ENCODE measurements at regions of chr14 and their contacts with region 1.

Region 1: GRCh38 chr14:68795597-68796417 is 2.9 kb upstream of the ZFP36L1 start:
- DNase-seq: peak in 1 of 2 experiments; percentile 90
- ATAC-seq: peak; percentile 60 to 75
- H3K4me3 ChIP-seq: peak overlapping the region; percentile 95
- H3K27ac ChIP-seq: peak overlapping the region; percentile 99 to 100
- H3K4me1 ChIP-seq: peaks cover 21% of the 10 kb centered on the region
- CTCF ChIP-seq: peak; percentile 38; the same call in 2 of the 3 replicates
- EP300 ChIP-seq: no peak; a peak in 1 of 5 replicates
- POLR2A ChIP-seq: peak; percentile 83
- RAD21 ChIP-seq: no peak; a peak in 4 of 5 replicates

Region 2: GRCh38 chr14:67943947-67944346 is 851.9 kb before region 1 on chr14:
- CTCF ChIA-PET with region 1: interaction called, 3 read pairs
- POLR2A ChIA-PET with region 1: interaction called, 18 read pairs
- DNase-seq: peak; percentile 44 to 92
- ATAC-seq: peak; percentile 88 to 89
- H3K4me3 ChIP-seq: no peak overlapping the region
- H3K27ac ChIP-seq: peak overlapping the region; percentile 82 to 86
- H3K4me1 ChIP-seq: peaks cover 51% of the 10 kb centered on the region
- CTCF ChIP-seq: peak; percentile 93
- EP300 ChIP-seq: peak in 1 of 2 experiments; percentile 18; a peak in 1 of 5 replicates
- POLR2A ChIP-seq: no peak
- RAD21 ChIP-seq: peak; percentile 96 to 98

Region 3: DNA sequence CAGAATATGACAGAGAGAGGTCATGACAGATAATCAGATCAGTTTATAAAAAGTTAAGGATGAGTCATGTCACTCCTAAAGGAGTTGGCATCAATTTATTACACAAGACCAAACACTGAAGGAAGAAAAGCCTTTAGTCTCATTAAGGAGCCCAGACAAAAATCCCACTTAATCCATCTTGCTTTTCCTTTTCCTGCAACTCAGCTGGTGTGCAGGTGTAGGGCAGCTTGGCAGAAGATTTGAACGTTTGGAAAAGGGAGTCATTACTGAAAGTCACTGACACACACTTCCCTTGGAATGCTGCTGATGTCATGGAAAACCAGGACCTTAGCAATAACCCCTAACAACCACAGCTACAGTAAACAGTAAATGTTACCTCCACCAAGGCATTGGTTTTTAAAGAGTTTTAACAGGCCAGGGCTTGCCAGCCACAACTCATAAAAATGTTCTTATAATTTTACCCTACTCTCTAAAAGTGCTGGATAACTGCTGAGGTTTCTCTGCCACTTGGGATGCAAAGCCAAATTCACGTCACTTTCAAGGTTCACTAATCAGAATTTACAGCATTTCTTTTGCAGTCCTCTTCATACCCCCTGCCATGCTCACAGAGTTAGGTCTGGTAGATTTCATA is 655.6 kb before region 1 on chr14:
- CTCF ChIA-PET with region 1: no interaction called
- POLR2A ChIA-PET with region 1: interaction called, 34 read pairs
- DNase-seq: peak; percentile 70 to 99
- ATAC-seq: peak; percentile 81 to 86
- H3K4me3 ChIP-seq: no peak overlapping the region
- H3K27ac ChIP-seq: peak overlapping the region; percentile 93 to 98
- H3K4me1 ChIP-seq: peaks cover 90% of the 10 kb centered on the region
- CTCF ChIP-seq: no peak
- EP300 ChIP-seq: peak; percentile 97 to 99
- POLR2A ChIP-seq: no peak
- RAD21 ChIP-seq: peak; percentile 55 to 79

Region 4: GRCh38 chr14:68232300-68233055 is 563.3 kb before region 1 on chr14:
- CTCF ChIA-PET with region 1: interaction called, 5 read pairs
- POLR2A ChIA-PET with region 1: interaction called, 24 read pairs
- DNase-seq: peak; percentile 77 to 98
- ATAC-seq: peak; percentile 96
- H3K4me3 ChIP-seq: no peak overlapping the region
- H3K27ac ChIP-seq: peak overlapping the region; percentile 95 to 96
- H3K4me1 ChIP-seq: peaks cover 62% of the 10 kb centered on the region
- CTCF ChIP-seq: no peak
- EP300 ChIP-seq: peak; percentile 92 to 98
- POLR2A ChIP-seq: no peak
- RAD21 ChIP-seq: peak; percentile 40 to 64

Region 5: DNA sequence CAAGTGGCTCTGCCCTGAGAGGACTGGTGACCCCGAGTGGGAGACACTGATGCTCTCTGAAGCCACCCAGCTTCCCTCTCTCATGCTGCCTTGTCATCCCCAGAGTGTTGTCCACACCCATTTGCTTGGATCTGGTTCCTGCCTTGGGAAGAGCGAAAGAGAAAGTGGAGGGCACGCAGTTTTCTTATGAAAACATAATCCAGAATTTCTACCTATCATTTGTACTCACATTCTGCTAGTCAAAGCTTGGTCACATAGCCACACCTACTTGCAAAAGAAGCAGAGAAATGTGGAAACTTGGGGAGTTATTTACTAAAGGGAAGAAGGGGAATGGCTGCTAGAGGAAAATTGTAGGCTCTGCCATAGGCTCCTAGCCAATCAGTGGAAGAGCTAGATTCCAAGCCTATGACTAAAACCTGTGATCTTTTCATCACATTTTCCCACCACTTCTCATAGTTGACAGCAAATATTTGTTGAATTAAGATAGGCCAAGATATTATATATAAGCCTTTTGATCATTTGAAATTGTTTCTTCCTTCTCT is 329.2 kb before region 1 on chr14:
- CTCF ChIA-PET with region 1: interaction called, 3 read pairs
- POLR2A ChIA-PET with region 1: interaction called, 15 read pairs
- DNase-seq: peak; percentile 84 to 95
- ATAC-seq: peak; percentile 79 to 83
- H3K4me3 ChIP-seq: no peak overlapping the region
- H3K27ac ChIP-seq: peak overlapping the region; percentile 93 to 100
- H3K4me1 ChIP-seq: peaks cover 93% of the 10 kb centered on the region
- CTCF ChIP-seq: no peak
- EP300 ChIP-seq: peak; percentile 41 to 55; a peak in 2 of 5 replicates
- POLR2A ChIP-seq: no peak
- RAD21 ChIP-seq: peak; percentile 16 to 35; a peak in 3 of 5 replicates

Region 6: GRCh38 chr14:68586896-68587751 is 208.7 kb before region 1 on chr14:
- CTCF ChIA-PET with region 1: no interaction called
- POLR2A ChIA-PET with region 1: no interaction called
- DNase-seq: no peak
- ATAC-seq: peak in 1 of 2 experiments; percentile 61; a peak in 3 of 6 replicates
- H3K4me3 ChIP-seq: no peak overlapping the region
- H3K27ac ChIP-seq: peak overlapping the region; percentile 69 to 75
- H3K4me1 ChIP-seq: peaks cover 11% of the 10 kb centered on the region
- CTCF ChIP-seq: no peak
- EP300 ChIP-seq: no peak
- POLR2A ChIP-seq: no peak
- RAD21 ChIP-seq: no peak

Region 7: GRCh38 chr14:68775143-68776126 is 20.4 kb before region 1 on chr14:
- CTCF ChIA-PET with region 1: no interaction called
- POLR2A ChIA-PET with region 1: interaction called, 37 read pairs
- DNase-seq: no peak
- ATAC-seq: no peak
- H3K4me3 ChIP-seq: no peak overlapping the region
- H3K27ac ChIP-seq: peak overlapping the region; percentile 38 to 94
- H3K4me1 ChIP-seq: peaks cover 28% of the 10 kb centered on the region
- CTCF ChIP-seq: no peak
- EP300 ChIP-seq: no peak
- POLR2A ChIP-seq: no peak
- RAD21 ChIP-seq: no peak

Region 8: DNA sequence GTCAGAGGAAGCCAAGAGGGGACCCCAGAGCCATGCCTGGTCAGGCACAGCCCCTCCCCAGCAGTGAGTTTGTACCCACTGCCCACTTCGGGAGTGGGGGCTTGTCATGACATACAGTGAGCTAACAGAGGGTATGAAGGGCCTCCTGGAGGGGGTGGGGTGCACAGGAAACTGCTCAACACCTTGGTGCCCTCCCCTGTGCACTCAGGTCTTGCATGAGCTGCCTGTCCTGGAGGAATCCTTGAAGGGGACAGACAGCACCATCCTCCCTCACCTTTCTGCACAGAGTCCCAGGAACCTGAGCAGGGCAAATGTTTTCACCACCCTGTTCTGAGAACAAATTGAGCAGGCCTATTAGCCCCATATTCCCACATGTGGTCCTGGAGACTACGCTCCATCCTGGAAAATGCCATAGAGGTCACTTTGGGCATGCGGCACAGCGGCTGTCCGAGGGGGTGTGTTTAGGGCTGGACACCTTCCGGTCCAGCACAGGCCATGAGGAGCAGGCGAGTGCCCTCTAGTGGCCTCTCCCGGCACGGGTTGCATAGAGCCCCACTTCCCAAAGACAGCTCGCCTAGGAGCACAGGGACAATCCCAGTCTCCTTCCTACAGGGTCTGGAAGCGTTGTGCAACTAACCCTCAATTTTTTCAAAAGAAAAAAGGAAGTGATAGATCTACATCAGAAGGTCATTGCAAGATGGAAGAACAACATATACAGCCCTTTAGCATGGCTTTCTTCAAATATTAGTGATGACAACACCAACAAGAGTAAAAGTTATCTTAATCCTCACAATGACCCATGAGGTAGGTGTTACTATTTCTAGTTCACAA is 28.9 kb after region 1 on chr14:
- CTCF ChIA-PET with region 1: interaction called, 85 read pairs
- POLR2A ChIA-PET with region 1: interaction called, 187 read pairs
- DNase-seq: peak; percentile 80 to 90
- ATAC-seq: peak; percentile 94 to 99
- H3K4me3 ChIP-seq: no peak overlapping the region
- H3K27ac ChIP-seq: peak overlapping the region; percentile 60 to 72
- H3K4me1 ChIP-seq: no peaks in the 10 kb centered on the region
- CTCF ChIP-seq: peak; percentile 84
- EP300 ChIP-seq: no peak
- POLR2A ChIP-seq: no peak
- RAD21 ChIP-seq: peak; percentile 80 to 85